Dorsolateral prefrontal cortex (tissue), 120 donors: ENCODE measurements at regions of chr11 and their contacts with region 1.

Region 1: DNA sequence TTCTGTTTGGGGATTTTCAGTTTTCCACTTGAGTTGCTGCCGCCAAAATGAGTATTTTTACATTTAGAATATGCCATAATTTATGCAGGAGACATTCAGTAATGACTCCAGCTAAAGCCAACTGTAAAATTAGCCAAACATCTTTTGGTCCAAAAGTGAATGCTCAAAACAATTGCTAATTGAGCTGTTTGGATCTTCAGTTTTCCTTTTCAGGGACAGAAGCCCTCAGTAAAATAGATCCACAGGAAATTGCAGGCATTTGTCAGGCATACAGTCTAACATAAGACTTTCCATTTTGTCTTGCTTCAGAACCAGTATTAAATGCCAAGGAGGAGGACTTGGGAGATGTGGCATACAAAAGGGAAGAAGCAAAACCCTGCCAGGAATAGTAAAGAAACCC is 524.8 kb upstream of the API5 start:
- DNase-seq: no peak
- H3K4me3 ChIP-seq: no peak overlapping the region
- H3K27ac ChIP-seq: no peak overlapping the region
- H3K27me3 ChIP-seq: no peaks in the 10 kb centered on the region
- CTCF ChIP-seq: no peak

Region 2: DNA sequence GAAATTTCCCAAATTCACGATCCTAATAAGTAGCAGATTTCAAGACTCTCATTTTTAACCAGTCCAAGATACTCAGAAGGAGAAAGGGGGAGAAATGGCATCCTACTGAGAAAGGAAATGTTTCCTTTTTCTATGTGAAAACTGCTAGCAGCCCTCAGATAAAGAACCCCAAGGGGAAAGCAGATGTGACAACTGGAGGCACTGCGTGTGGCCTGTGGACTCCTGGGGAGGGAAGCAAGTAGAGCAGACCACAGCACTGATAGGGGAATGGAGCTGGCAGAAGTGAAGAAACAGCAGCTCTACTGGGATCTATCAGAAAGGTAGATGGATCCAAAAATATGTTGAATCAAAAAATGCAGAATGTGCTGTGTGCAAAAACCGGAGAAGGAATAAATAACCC is 285.1 kb after region 1 on chr11:
- intact Hi-C with region 1: no loop called
- DNase-seq: no peak
- H3K4me3 ChIP-seq: no peak overlapping the region
- H3K27ac ChIP-seq: no peak overlapping the region
- H3K27me3 ChIP-seq: no peaks in the 10 kb centered on the region
- CTCF ChIP-seq: no peak

Region 3: GRCh38 chr11:43124272-43124935 is 337.4 kb after region 1 on chr11:
- intact Hi-C with region 1: loop called in 1 of 2 experiments (anchors 10 kb)
- DNase-seq: no peak
- H3K4me3 ChIP-seq: no peak overlapping the region
- H3K27ac ChIP-seq: no peak overlapping the region
- H3K27me3 ChIP-seq: no peaks in the 10 kb centered on the region
- CTCF ChIP-seq: no peak